ENCODE measurements at regions of chr18 and their contacts with region 1.

Region 1: DNA sequence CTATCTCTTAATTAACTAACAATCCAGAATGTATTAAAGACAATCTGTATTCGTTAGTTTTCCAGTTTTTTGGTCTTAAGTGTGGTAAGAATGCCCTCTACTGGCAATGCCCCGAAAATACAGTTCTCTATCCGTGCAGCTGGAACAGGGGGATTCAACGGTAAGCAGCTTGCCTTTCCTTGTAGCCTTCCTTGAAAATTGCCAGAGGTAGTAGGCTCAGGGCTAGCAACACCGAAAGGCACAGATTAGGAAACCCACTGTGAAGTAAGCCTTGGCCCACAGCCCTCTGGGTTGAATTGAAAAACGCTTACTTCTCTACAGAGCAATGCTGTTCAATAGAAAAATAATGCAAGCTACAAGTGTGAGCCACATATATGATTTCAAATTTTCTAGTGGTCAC is 17.1 kb upstream of the VPS4B start:
- DNase-seq: peak; percentile 12 to 64 (median 49)
- ATAC-seq: peak; percentile 81
- H3K4me3 ChIP-seq: no peak overlapping the region
- H3K4me3 Mint-ChIP-seq: no peak overlapping the region
- H3K27ac ChIP-seq: no peak overlapping the region
- H3K27ac Mint-ChIP-seq: no peak overlapping the region
- H3K4me1 ChIP-seq: no peaks in the 10 kb centered on the region
- H3K4me1 Mint-ChIP-seq: peaks cover 0 to 4% (median 3%) of the 10 kb centered on the region in 7 donors
- H3K27me3 ChIP-seq: no peaks in the 10 kb centered on the region
- H3K27me3 Mint-ChIP-seq: peaks cover 0 to 43% (median 5%) of the 10 kb centered on the region in 5 donors

Region 2: GRCh38 chr18:62522504-62523254 is 916.7 kb before region 1 on chr18 and contains the start of gene ZCCHC2:
- CTCF ChIA-PET with region 1: no interaction called
- POLR2A ChIA-PET with region 1: no interaction called
- intact Hi-C with region 1: no loop called
- DNase-seq: peak; percentile 96 to 100 (median 99)
- ATAC-seq: peak; percentile 88
- H3K4me3 ChIP-seq: peak within 1 kb of the TSS; percentile 81
- H3K4me3 Mint-ChIP-seq: peak within 1 kb of the TSS; percentile 91 to 98 (median 96)
- H3K27ac ChIP-seq: peak within 1 kb of the TSS; percentile 88
- H3K27ac Mint-ChIP-seq: peak within 1 kb of the TSS; percentile 62 to 97 (median 93)
- H3K4me1 ChIP-seq: peaks cover 23 to 26% of the 10 kb centered on the region in 2 donors
- H3K4me1 Mint-ChIP-seq: peaks cover 21 to 44% (median 37%) of the 10 kb centered on the region in 7 donors
- H3K27me3 ChIP-seq: no peaks in the 10 kb centered on the region
- H3K27me3 Mint-ChIP-seq: no peaks in the 10 kb centered on the region
- total RNA-seq, gene ZCCHC2: 51.1 to 68.5 (median 63.1) TPM

Region 3: DNA sequence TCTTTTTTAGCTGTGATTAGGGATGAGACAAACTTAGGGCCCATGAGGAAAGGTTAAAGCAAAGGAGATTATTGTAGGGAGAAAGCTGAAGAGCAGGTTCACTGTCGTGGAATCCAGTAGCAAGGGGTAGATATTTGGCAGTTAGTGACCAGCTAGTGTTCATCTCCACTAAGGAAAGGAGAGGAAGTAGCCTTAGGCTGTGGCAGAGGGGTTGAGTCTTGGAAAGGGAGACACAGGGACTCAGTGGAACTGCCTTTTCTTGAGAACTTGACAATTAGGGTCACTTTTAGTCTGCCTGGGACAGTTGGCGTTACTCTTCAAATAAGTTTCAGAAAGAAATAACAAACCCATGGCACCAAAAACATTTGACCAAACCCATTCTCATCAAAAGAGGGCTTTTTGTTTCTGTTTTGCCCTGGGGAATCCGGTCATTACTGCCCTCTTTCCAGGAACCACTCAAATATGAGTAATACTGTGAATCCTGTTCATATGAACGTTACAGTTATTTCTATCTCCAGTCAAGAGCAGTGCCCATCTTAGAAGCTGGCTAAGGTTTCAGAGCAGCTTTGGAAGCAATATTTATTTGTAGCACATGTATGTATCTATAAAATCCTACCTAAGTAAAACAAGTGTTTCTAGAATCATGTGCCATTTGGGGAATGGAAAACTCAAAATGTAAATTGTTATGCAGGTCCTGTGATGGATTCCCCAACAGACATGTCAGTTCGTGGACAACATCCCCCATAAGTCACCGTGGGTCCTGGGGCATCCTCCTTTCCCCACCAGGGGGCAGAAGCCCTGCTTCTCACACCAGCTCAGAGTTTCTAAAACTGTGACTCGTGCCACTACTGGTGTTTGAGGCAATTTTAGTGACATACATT is 801.3 kb before region 1 on chr18:
- CTCF ChIA-PET with region 1: interaction called, 3 read pairs
- POLR2A ChIA-PET with region 1: no interaction called
- intact Hi-C with region 1: loop called in 1 of 2 experiments (anchors 1 kb)
- DNase-seq: peak; percentile 7 to 49 (median 27)
- ATAC-seq: peak; percentile 76
- H3K4me3 ChIP-seq: no peak overlapping the region
- H3K4me3 Mint-ChIP-seq: no peak overlapping the region
- H3K27ac ChIP-seq: no peak overlapping the region
- H3K27ac Mint-ChIP-seq: no peak overlapping the region
- H3K4me1 ChIP-seq: no peaks in the 10 kb centered on the region
- H3K4me1 Mint-ChIP-seq: peaks cover 0 to 14% (median 0%) of the 10 kb centered on the region in 7 donors
- H3K27me3 ChIP-seq: no peaks in the 10 kb centered on the region
- H3K27me3 Mint-ChIP-seq: peaks cover 18 to 30% (median 24%) of the 10 kb centered on the region in 5 donors

Region 4: GRCh38 chr18:63131106-63131958 is 308.0 kb before region 1 on chr18:
- CTCF ChIA-PET with region 1: interaction called, 8 read pairs
- POLR2A ChIA-PET with region 1: interaction called, 3 read pairs
- intact Hi-C with region 1: loop called (anchors 1 to 5 kb)
- DNase-seq: peak in 7 of 9 donors; percentile 51 to 71 (median 69)
- ATAC-seq: peak; percentile 80
- H3K4me3 ChIP-seq: no peak overlapping the region
- H3K4me3 Mint-ChIP-seq: peak overlapping the region in 9 of 10 donors; percentile 13 to 81 (median 45)
- H3K27ac ChIP-seq: peak overlapping the region; percentile 61
- H3K27ac Mint-ChIP-seq: peak overlapping the region in 8 of 9 donors; percentile 36 to 94 (median 83)
- H3K4me1 ChIP-seq: peaks cover 9 to 18% of the 10 kb centered on the region in 2 donors
- H3K4me1 Mint-ChIP-seq: peaks cover 28 to 58% (median 50%) of the 10 kb centered on the region in 7 donors
- H3K27me3 ChIP-seq: no peaks in the 10 kb centered on the region
- H3K27me3 Mint-ChIP-seq: no peaks in the 10 kb centered on the region

Region 5: DNA sequence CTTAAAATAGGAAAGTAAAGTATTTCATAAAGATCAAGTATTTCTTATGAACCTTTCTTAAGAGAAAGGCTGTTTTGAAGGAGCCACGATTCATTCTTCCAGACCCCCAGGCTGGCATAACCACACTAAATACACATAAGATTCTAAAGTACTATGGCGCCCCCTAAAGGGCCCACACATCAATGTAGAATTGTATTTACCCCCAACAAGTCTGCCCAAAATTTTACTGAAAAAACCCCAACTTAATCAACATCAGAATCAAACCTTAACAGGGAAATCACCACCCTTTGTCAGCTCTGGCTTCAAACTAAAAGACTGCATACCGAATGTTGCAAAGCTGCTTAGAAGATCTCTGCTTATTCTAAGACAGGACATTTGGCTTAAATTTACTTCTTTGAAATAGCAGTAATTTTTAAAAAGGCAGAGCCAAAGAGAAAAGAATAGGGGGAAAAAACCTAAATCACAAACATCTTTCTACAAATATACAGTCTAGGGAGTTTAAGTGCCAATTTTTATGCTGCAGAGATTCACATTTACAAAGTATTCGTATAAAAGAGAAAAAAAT is 99.3 kb before region 1 on chr18:
- CTCF ChIA-PET with region 1: interaction called, 36 read pairs
- POLR2A ChIA-PET with region 1: no interaction called
- intact Hi-C with region 1: loop called (anchors 1 kb)
- DNase-seq: peak in 7 of 9 donors; percentile 29 to 59 (median 51)
- ATAC-seq: peak; percentile 82
- H3K4me3 ChIP-seq: no peak overlapping the region
- H3K4me3 Mint-ChIP-seq: no peak overlapping the region
- H3K27ac ChIP-seq: no peak overlapping the region
- H3K27ac Mint-ChIP-seq: peak overlapping the region in 1 of 9 donors; percentile 29
- H3K4me1 ChIP-seq: no peaks in the 10 kb centered on the region
- H3K4me1 Mint-ChIP-seq: peaks cover 0 to 9% (median 5%) of the 10 kb centered on the region in 7 donors
- H3K27me3 ChIP-seq: no peaks in the 10 kb centered on the region
- H3K27me3 Mint-ChIP-seq: no peaks in the 10 kb centered on the region

Measured in naive thymus-derived CD4-positive, alpha-beta T cell (primary cell).